Activated CD4-positive, alpha-beta memory T cell treated with anti-CD3 and anti-CD28 coated beads, Interleukin-2, amount 10 ng/mL, durations not matched to agents 7 days and 5 days (primary cell): ENCODE measurements at regions of chr16 and their contacts with region 1.

Region 1: GRCh38 chr16:10871149-10871991 is 5.6 kb upstream of the CIITA start:
- DNase-seq: peak; percentile 88
- H3K4me3 Mint-ChIP-seq: peak overlapping the region; percentile 48
- H3K27ac Mint-ChIP-seq: peak overlapping the region; percentile 95
- H3K4me1 Mint-ChIP-seq: peaks cover 94% of the 10 kb centered on the region
- H3K27me3 Mint-ChIP-seq: no peaks in the 10 kb centered on the region

Region 2: GRCh38 chr16:10743610-10744393 is 127.6 kb before region 1 on chr16 and contains the start of gene NUBP1:
- CTCF ChIA-PET with region 1: interaction called, 3 read pairs
- POLR2A ChIA-PET with region 1: interaction called, 44 read pairs
- DNase-seq: peak; percentile 100
- H3K4me3 Mint-ChIP-seq: peak within 1 kb of the TSS; percentile 86
- H3K27ac Mint-ChIP-seq: peak within 1 kb of the TSS; percentile 97
- H3K4me1 Mint-ChIP-seq: peaks cover 57% of the 10 kb centered on the region
- H3K27me3 Mint-ChIP-seq: no peaks in the 10 kb centered on the region
- total RNA-seq, gene NUBP1: 29.4 to 31.5 TPM

Region 3: DNA sequence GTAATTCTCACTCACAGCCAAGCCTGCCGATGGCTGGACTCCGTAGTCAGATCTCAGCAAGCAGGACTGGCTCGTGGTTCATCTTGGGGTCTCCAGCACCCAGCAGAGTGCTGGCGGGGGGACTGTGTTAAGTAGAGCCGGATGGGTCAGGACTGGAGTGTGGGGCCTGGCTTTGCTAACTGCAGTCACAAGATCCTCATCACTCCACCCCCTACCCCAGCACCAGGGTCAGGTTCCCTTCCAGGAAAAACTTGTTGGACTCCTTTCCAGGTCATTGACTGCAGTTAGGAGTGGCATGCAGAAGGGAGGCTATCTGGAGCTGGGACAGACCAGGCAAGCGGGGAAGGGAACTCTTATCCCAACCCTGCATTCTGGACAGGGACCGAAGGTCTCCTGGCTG is 11.6 kb after region 1 on chr16:
- CTCF ChIA-PET with region 1: interaction called, 8 read pairs
- POLR2A ChIA-PET with region 1: interaction called, 29 read pairs
- DNase-seq: no peak
- H3K4me3 Mint-ChIP-seq: no peak overlapping the region
- H3K27ac Mint-ChIP-seq: no peak overlapping the region
- H3K4me1 Mint-ChIP-seq: peaks cover 76% of the 10 kb centered on the region
- H3K27me3 Mint-ChIP-seq: no peaks in the 10 kb centered on the region